ENCODE measurements at regions of chr10 and their contacts with region 1.

Region 1: DNA sequence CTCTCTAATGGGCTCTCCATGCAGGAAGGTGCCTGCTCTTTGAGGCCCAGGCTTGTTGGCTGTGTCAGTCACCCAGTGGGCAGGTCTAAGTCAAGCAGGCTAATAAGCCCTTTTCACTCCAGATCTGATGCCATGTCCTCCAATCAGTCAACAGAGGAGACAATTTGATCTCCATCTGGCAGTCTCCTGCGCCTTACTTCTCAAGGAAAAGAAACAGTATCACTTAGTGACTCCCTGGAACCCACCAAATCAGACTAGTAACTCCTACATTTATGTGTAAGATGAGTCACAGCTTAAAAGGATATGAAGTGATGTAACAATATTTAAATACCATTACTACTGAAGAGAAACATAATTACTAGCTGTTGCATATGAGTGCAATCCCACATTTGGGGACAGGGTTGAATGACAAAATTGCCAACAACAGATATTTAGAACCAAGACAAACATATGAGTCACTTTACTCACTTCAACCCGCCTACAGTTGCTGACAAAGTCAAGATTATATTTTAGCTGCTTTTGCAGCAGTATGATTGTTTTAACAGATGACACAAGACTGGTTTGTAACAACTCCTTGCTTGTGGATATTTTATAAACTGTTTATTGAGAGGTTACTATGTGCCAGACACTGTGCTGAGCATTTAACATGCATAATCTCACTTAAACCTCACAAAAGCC is 72.1 kb downstream of the USP6NL start:
- DNase-seq: no peak
- CTCF ChIP-seq: no peak

Region 2: GRCh38 chr10:11578802-11579255 is 39.5 kb after region 1 on chr10:
- in situ Hi-C with region 1: loop called (anchors 5 kb)
- DNase-seq: peak; percentile 18
- CTCF ChIP-seq: no peak